Naive thymus-derived CD8-positive, alpha-beta T cell (primary cell): ENCODE measurements at regions of chr5 and their contacts with region 1.

Region 1: GRCh38 chr5:41924872-41925554 is at the start of gene FBXO4:
- DNase-seq: peak; percentile 79 to 93 (median 89)
- ATAC-seq: peak; percentile 92 to 96
- H3K4me3 Mint-ChIP-seq: peak within 1 kb of the TSS; percentile 81 to 96 (median 84)
- H3K27ac Mint-ChIP-seq: peak within 1 kb of the TSS; percentile 94 to 99 (median 96)
- H3K4me1 Mint-ChIP-seq: peaks cover 8 to 36% (median 23%) of the 10 kb centered on the region in 4 donors
- H3K27me3 Mint-ChIP-seq: no peaks in the 10 kb centered on the region
- polyA plus RNA-seq, gene FBXO4: 17.5 to 22.4 (median 19.6) TPM

Region 2: GRCh38 chr5:41903892-41904799 is 20.9 kb before region 1 on chr5 and contains the start of gene RIMOC1:
- POLR2A ChIA-PET with region 1: interaction called, 51 read pairs
- DNase-seq: peak; percentile 91 to 99 (median 96)
- ATAC-seq: peak; percentile 87 to 88
- H3K4me3 Mint-ChIP-seq: peak within 1 kb of the TSS; percentile 88 to 100 (median 98)
- H3K27ac Mint-ChIP-seq: peak within 1 kb of the TSS; percentile 95 to 100 (median 98)
- H3K4me1 Mint-ChIP-seq: peaks cover 12 to 46% (median 39%) of the 10 kb centered on the region in 4 donors
- H3K27me3 Mint-ChIP-seq: peaks cover 0 to 5% (median 0%) of the 10 kb centered on the region in 5 donors
- polyA plus RNA-seq, gene RIMOC1: 8.5 to 15.2 (median 9.5) TPM

Region 3: GRCh38 chr5:41940641-41941040 is 15.6 kb after region 1 on chr5:
- POLR2A ChIA-PET with region 1: no interaction called
- DNase-seq: no peak
- ATAC-seq: no peak
- H3K4me3 Mint-ChIP-seq: no peak overlapping the region
- H3K27ac Mint-ChIP-seq: peak overlapping the region in 1 of 10 donors; percentile 74
- H3K4me1 Mint-ChIP-seq: no peaks in the 10 kb centered on the region
- H3K27me3 Mint-ChIP-seq: no peaks in the 10 kb centered on the region